ENCODE measurements at regions of chr13 and their contacts with region 1.

Region 1: DNA sequence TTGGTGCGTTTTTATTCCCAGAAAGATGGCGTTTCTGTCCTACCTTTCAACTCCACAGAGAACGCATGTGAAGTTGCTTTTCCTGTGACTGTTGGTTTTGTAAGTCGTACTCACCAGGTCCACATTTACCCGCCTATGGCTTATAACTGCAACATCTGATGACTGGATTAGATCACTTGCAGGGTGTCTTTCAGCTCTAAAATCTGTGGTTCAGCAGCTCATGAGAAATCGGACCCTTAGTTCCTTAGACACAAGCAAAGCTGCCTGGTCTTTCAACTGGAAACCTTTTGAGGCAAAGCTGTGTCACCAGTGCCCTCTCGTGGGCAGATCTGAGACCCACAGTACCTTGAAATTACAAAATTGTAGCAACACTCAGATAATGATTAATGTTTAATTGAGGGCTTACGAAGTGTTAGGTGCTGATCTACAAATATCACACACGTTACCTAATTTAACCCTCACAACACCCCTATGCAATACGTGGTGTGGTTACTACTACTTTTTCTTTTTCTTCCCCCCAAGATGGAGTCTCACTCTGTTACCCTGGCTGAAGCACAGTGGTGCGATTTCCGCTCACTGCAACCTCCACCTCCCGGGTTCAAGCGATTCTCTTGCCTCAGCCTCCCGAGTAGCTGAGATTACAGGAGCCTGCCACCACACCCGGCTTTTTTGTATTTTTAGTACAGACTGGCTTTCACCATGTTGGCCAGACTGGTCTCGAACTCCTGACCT is 65.4 kb downstream of the RUBCNL start:
- DNase-seq: peak; percentile 91
- H3K4me3 Mint-ChIP-seq: peak overlapping the region; percentile 88
- H3K27ac Mint-ChIP-seq: peak overlapping the region; percentile 93
- H3K4me1 Mint-ChIP-seq: peaks cover 24% of the 10 kb centered on the region
- H3K27me3 Mint-ChIP-seq: no peaks in the 10 kb centered on the region

Region 2: DNA sequence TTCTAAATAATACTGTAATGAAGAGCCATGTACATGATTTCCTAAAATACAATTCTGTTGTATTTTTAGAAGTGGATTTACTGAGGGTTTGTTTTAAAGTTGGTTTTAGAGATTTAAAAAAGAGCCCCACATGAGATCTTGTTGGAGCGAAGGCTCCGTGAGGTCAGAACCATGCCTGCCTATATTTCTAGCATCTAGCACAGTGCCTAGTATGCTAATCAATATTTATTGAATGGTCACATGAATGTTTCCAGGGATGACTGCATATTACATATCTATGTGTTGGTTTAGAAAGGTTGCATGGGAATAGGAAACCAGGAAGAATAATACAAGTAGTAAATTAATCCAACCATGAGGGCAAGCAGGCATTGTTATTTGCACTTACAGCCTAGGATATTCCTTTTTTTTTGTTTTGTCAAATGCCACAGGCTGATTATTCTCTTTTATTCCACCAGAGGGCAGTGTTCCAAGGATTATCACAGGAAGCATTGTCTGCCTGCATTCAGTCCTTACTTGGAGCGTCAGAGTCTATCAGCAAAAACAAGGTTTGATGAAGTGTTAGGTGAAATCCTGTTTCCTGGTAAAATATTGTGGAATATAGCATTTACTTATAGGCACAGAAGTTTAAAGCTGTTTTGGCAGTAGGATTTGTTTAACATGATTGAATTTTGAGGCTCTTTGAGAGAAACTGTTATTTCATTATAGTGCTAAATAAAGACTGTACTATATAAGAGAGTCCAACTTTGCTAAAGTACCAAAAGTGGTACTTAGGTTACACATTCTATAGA is 810.2 kb before region 1 on chr13:
- intact Hi-C with region 1: loop called (anchors 2 kb)
- DNase-seq: peak; percentile 83
- H3K4me3 Mint-ChIP-seq: no peak overlapping the region
- H3K27ac Mint-ChIP-seq: peak overlapping the region; percentile 23
- H3K4me1 Mint-ChIP-seq: peaks cover 5% of the 10 kb centered on the region
- H3K27me3 Mint-ChIP-seq: no peaks in the 10 kb centered on the region

Region 3: DNA sequence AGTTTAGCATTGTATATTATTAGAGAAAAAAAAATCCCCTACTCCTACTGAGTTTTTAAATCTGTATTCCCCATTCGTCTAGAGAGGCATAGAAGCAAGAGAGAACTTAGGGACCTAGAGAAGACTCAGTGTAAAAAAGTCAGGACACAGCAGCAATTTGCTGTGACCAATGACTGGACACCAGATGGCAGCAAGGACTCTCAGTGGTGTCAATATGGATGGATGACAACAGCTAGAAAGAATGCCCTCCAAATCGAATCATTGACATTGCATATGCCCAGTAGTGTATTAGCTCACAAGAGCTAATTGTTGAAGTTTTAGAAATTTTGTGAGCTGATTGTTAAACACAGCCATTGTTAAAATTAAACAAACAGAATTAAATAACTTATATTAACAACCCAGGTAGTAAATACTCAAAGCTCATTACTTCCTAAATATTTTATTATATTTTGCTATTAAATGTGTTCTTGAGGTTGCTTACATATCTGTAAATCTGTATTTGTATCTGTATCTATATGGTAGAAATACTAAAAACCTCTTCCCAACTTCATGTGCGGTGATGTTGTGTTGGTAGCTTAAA is 514.0 kb before region 1 on chr13:
- intact Hi-C with region 1: loop called (anchors 10 kb)
- DNase-seq: peak; percentile 67
- H3K4me3 Mint-ChIP-seq: no peak overlapping the region
- H3K27ac Mint-ChIP-seq: no peak overlapping the region
- H3K4me1 Mint-ChIP-seq: peaks cover 4% of the 10 kb centered on the region
- H3K27me3 Mint-ChIP-seq: peaks cover 4% of the 10 kb centered on the region

Region 4: DNA sequence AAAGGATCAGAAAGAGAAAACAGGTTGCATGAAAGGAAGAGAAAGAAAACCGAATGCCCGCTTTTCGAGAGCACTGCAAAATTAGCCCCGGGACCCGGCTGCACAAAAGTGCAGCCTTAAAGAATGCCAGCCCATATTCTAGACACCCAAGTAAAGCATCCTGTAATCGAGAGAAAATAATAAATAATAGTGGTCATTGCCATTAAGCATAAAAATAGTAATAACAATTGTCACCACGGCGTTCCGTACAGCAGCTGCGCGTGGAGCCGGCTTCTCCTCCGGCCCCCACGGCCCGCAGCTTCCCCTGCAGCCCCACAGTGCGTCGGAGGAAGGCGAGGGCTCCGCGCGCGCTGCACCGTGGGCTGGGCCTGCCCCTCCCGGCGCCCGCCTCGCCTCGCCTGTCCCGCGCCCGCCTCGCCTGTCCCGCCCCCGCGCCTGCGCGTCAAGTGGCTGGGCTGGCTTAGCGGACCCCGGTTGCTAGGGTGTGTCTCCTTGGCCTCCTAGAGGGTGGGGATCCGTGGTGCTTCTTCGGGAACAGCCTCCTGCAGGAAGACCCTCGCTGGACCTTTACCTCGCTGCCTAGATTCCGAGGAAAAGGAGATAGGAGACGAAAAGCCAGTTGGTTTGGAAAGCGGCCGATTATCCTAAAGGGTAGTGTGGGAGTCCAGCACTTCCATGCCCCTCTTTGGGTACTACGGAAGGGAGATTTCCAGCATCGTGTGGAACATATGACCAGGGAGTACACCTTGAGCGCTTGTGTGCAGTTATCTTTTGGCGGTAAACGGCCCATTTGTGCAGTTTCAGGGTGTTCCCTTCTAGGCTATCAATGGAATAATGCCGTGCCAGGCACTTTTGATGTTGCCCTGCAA is 109.9 kb before region 1 on chr13 and contains the start of gene LRRC63:
- intact Hi-C with region 1: loop called (anchors 5 kb)
- DNase-seq: peak; percentile 97
- H3K4me3 Mint-ChIP-seq: peak within 1 kb of the TSS; percentile 86
- H3K27ac Mint-ChIP-seq: peak within 1 kb of the TSS; percentile 92
- H3K4me1 Mint-ChIP-seq: peaks cover 25% of the 10 kb centered on the region
- H3K27me3 Mint-ChIP-seq: peaks cover 2% of the 10 kb centered on the region
- total RNA-seq, gene LRRC63: 0.26 and 0.40 TPM in 2 replicates

Region 5: GRCh38 chr13:46295491-46296114 is 26.1 kb before region 1 on chr13:
- intact Hi-C with region 1: loop called (anchors 1 kb)
- DNase-seq: peak; percentile 83
- H3K4me3 Mint-ChIP-seq: peak overlapping the region; percentile 71
- H3K27ac Mint-ChIP-seq: peak overlapping the region; percentile 90
- H3K4me1 Mint-ChIP-seq: peaks cover 36% of the 10 kb centered on the region
- H3K27me3 Mint-ChIP-seq: no peaks in the 10 kb centered on the region